ENCODE measurements at regions of chr6 and their contacts with region 1.

Region 1: GRCh38 chr6:10759312-10759839 is 11.8 kb downstream of the TMEM14B start:
- DNase-seq: peak; percentile 71 to 95
- H3K4me3 ChIP-seq: no peak overlapping the region; the same call in 1 of the 2 replicates
- H3K27ac ChIP-seq: peak overlapping the region; percentile 82
- H3K4me1 ChIP-seq: peaks cover 21% of the 10 kb centered on the region
- H3K27me3 ChIP-seq: no peaks in the 10 kb centered on the region
- CTCF ChIP-seq: peak; percentile 77

Region 2: GRCh38 chr6:10478187-10479040 is 281.0 kb before region 1 on chr6:
- CTCF ChIA-PET with region 1: no interaction called
- POLR2A ChIA-PET with region 1: no interaction called
- intact Hi-C with region 1: loop called (anchors 1 kb)
- DNase-seq: peak; percentile 8 to 37
- H3K4me3 ChIP-seq: no peak overlapping the region
- H3K27ac ChIP-seq: no peak overlapping the region
- H3K4me1 ChIP-seq: peaks cover 11% of the 10 kb centered on the region
- H3K27me3 ChIP-seq: no peaks in the 10 kb centered on the region
- CTCF ChIP-seq: peak; percentile 78

Region 3: DNA sequence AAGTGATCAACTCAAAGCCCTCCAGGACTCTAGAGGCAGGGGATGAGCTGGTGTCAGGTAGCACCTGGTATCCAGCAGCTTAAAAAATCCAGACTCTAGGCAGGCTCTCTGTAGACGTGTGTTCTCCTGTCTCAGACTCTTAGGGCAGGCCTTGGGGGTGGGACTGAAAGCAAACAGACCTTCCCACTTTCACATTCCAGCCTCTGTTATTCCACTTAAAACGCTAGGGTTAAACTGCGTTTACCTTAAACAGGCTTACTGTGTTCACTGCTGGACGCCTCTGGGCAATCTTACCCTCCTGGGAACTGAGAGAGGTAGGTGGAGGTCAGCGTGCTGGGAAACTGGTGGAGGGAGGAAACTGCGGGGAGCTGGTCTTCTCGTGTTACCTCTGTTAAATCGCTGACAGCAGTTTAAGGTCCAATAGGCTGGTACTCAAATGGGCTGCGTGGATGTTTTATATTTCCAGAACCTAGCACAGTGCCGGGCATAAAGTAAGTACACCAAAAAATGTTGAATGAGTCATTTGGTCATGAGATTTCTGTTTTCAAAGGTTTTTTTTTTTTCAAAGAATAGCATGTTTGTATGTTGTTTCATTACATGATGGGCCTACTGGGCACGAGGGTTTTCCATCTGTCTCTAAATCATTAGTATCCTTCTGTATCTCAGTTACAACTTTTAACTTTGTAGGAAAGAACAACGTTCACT is 238.1 kb before region 1 on chr6 and contains the start of gene GCNT2:
- CTCF ChIA-PET with region 1: no interaction called
- POLR2A ChIA-PET with region 1: no interaction called
- intact Hi-C with region 1: loop called (anchors 2 kb)
- DNase-seq: peak; percentile 80 to 92
- H3K4me3 ChIP-seq: peak within 1 kb of the TSS; percentile 46; the same call in 1 of the 2 replicates
- H3K27ac ChIP-seq: peak within 1 kb of the TSS; percentile 99
- H3K4me1 ChIP-seq: peaks cover 42% of the 10 kb centered on the region
- H3K27me3 ChIP-seq: no peaks in the 10 kb centered on the region
- CTCF ChIP-seq: no peak
- total RNA-seq, gene GCNT2: 28.4 and 35.7 TPM in 2 replicates

Region 4: GRCh38 chr6:10722820-10723566 is 36.4 kb before region 1 on chr6 and contains the start of gene TMEM14C:
- CTCF ChIA-PET with region 1: no interaction called
- POLR2A ChIA-PET with region 1: interaction called, 8 read pairs
- intact Hi-C with region 1: loop called (anchors 2 kb)
- DNase-seq: peak; percentile 85 to 99
- H3K4me3 ChIP-seq: peak within 1 kb of the TSS; percentile 96
- H3K27ac ChIP-seq: peak within 1 kb of the TSS; percentile 85
- H3K4me1 ChIP-seq: 0 out of 2 replicates have a peak, but pooled peaks cover 10% of the 10 kb centered on the region
- H3K27me3 ChIP-seq: no peaks in the 10 kb centered on the region
- CTCF ChIP-seq: no peak
- total RNA-seq, gene TMEM14C: 154 and 166 TPM in 2 replicates

Region 5: DNA sequence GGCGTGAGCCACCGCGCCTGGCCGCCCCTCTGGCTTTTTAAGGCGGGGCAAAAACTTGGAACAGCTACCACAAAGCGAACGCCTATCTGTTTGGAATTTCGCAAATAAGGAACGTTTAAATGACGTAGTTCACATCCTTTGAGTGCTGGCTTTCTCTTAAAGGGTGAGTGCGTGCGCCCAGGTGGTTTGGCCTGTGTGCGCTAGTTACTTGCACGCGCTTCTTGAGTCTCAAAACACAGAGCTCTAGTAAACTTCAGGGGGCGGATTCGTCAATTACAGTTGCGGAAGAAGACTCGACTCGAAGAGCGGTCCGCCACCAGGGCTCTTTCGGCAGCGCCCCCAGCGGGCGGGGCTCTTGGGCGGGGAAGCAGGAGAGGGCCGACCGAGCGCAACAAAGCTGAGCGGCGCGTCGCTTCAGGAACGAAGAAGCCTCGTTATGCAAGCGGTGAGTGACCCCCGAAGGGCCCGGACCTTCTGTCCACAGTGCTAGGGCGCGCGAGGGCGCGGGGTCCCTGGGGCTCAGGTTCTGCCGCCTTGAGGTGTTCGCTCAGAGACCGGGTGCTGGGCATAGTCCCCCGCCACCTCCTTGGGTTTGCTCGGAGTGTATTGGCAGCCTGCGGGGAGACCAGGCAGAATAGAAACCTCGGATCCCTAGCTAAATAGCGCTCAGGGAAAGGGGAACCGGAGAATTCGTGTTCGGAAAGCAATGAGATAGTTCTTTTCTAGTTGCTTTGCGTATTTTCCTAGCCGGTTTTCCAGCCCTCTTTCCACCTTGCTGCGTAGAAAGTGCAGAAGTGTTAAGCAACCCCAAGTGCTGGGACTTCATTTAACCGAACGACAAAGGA is 127.5 kb after region 1 on chr6 and contains the start of gene SYCP2L:
- CTCF ChIA-PET with region 1: no interaction called
- POLR2A ChIA-PET with region 1: no interaction called
- intact Hi-C with region 1: loop called (anchors 1 kb)
- DNase-seq: peak; percentile 80 to 90
- H3K4me3 ChIP-seq: peak within 1 kb of the TSS; percentile 81
- H3K27ac ChIP-seq: peak within 1 kb of the TSS; percentile 81
- H3K4me1 ChIP-seq: peaks cover 11% of the 10 kb centered on the region; the same call in 1 of the 2 replicates
- H3K27me3 ChIP-seq: no peaks in the 10 kb centered on the region
- CTCF ChIP-seq: peak; percentile 41; the same call in 1 of the 2 replicates
- total RNA-seq, gene SYCP2L: 12.6 and 15.7 TPM in 2 replicates

Region 6: DNA sequence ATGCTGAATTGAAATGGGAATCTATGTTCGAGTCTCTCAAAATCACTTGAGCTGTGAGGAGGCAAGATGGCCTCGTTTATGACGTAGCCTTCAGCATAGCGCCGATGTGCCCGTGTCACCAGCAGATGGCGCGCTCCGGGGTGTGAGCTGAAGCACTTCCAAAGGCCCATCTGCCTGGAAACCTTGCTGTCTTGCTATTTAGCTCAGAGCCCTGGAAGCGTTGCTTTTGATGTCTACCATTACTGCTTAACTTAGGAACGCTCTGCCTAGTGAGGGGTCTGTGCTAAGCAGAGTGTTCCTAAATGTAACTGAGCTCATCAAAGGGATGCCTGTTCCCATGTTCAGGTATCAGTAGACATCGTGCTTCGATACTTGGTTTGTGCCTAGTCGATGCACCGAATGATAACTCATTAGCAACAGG is 195.2 kb after region 1 on chr6:
- CTCF ChIA-PET with region 1: no interaction called
- POLR2A ChIA-PET with region 1: no interaction called
- intact Hi-C with region 1: no loop called
- DNase-seq: peak in 1 of 2 experiments; percentile 57
- H3K4me3 ChIP-seq: no peak overlapping the region
- H3K27ac ChIP-seq: no peak overlapping the region
- H3K4me1 ChIP-seq: no peaks in the 10 kb centered on the region
- H3K27me3 ChIP-seq: no peaks in the 10 kb centered on the region
- CTCF ChIP-seq: peak; percentile 46

Measured in PC-9 (cell line).